Naive thymus-derived CD4-positive, alpha-beta T cell (primary cell): ENCODE measurements at regions of chr4 and their contacts with region 1.

Region 1: GRCh38 chr4:103019308-103020124 is at the start of gene SLC9B1:
- DNase-seq: peak; percentile 87 to 95 (median 92)
- ATAC-seq: peak; percentile 98
- H3K4me3 ChIP-seq: peak within 1 kb of the TSS; percentile 48
- H3K4me3 Mint-ChIP-seq: peak within 1 kb of the TSS; percentile 84 to 98 (median 93)
- H3K27ac ChIP-seq: peak within 1 kb of the TSS; percentile 80
- H3K27ac Mint-ChIP-seq: peak within 1 kb of the TSS in 6 of 9 donors; percentile 96 to 99 (median 98)
- H3K4me1 ChIP-seq: peaks cover 13 to 14% of the 10 kb centered on the region in 2 donors
- H3K4me1 Mint-ChIP-seq: peaks cover 0 to 29% (median 20%) of the 10 kb centered on the region in 7 donors
- H3K27me3 ChIP-seq: no peaks in the 10 kb centered on the region
- H3K27me3 Mint-ChIP-seq: no peaks in the 10 kb centered on the region
- total RNA-seq, gene SLC9B1: 1.4 to 7.2 (median 3.9) TPM

Region 2: DNA sequence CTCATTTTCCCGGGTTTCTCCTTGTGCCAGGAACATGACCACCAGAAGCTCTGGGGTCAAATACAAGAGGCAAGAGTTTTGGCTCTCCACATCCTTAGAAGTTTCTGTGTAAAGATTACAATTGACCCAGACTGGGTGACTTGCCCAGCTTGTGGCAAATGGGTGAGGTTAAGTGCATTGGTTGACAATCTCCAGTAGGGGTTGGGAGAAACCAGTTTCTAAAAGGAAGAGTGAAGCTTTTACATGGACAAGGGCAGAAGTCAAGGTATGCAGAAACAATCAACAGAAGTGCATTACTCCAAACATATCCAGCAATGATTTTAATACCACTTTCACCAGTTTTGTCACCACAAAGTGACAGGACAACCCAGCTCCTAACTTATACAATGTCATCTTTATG is 764.1 kb before region 1 on chr4:
- CTCF ChIA-PET with region 1: no interaction called
- POLR2A ChIA-PET with region 1: no interaction called
- intact Hi-C with region 1: loop called in 1 of 2 experiments (anchors 10 kb)
- DNase-seq: no peak
- ATAC-seq: no peak
- H3K4me3 ChIP-seq: no peak overlapping the region
- H3K4me3 Mint-ChIP-seq: no peak overlapping the region
- H3K27ac ChIP-seq: no peak overlapping the region
- H3K27ac Mint-ChIP-seq: no peak overlapping the region
- H3K4me1 ChIP-seq: no peaks in the 10 kb centered on the region
- H3K4me1 Mint-ChIP-seq: peaks cover 0 to 9% (median 0%) of the 10 kb centered on the region in 7 donors
- H3K27me3 ChIP-seq: no peaks in the 10 kb centered on the region
- H3K27me3 Mint-ChIP-seq: no peaks in the 10 kb centered on the region

Region 3: DNA sequence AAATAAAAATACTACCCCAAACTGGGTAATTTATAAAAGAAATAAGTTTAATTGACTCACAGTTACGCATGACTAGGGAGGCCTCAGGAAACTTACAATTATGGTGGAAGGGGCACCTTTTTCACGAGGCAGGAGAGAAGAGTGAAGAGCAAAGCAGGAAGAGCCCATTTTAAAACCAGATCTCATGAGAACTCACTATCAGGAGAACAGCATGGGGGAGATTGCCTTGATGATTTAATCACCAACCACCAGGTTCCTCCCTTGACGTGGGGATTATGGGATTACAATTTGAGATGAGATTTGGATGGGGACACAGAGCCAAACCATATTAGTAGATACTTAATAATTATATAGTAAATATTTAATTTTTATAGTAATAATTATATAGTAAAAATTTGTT is 140.6 kb before region 1 on chr4:
- CTCF ChIA-PET with region 1: no interaction called
- POLR2A ChIA-PET with region 1: no interaction called
- intact Hi-C with region 1: no loop called
- DNase-seq: no peak
- ATAC-seq: no peak
- H3K4me3 ChIP-seq: no peak overlapping the region
- H3K4me3 Mint-ChIP-seq: no peak overlapping the region
- H3K27ac ChIP-seq: no peak overlapping the region
- H3K27ac Mint-ChIP-seq: peak overlapping the region in 1 of 9 donors; percentile 32
- H3K4me1 ChIP-seq: no peaks in the 10 kb centered on the region
- H3K4me1 Mint-ChIP-seq: peaks cover 5 to 24% (median 22%) of the 10 kb centered on the region in 7 donors
- H3K27me3 ChIP-seq: no peaks in the 10 kb centered on the region
- H3K27me3 Mint-ChIP-seq: no peaks in the 10 kb centered on the region

Region 4: DNA sequence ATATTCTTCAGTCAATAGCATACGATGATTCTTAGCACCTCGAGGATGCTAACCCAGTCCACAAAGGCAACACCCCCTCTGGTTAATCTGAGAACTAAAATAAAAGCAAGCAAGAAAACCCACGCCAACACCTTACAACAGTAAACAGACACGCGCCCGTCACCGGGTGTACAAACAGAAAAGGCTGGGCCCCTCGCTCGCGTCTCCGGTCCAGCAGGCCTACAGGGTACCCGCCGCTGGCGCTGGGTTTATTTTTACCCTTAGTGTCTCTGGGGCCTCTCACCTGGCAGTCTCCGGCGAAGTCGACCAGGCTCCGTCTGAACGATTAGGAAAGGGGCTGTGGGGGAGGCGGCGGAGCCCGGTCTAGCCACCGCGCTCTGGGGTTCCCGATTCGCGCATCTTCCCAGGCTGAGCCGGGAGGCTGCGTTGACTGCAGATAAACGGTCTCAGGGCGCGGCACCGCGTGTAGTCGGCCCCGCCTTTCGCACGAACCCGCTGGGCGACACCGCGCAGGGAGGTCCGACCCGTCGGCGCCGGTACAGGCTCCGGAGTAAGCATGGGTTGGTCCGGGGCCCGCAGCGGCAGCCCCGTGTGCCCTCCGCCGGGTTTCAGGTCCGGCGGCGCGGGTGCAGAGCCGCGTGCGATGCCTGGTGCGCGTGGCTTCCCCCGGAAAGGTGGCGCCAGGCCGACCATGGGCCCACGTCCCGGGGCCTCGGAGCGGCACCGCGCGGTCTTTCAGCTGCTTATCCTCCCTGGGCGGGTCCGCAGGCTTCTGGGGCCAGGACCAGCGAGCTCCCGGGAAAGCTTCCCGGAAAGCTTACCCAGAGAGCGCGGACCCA is 56.6 kb after region 1 on chr4:
- CTCF ChIA-PET with region 1: no interaction called
- POLR2A ChIA-PET with region 1: interaction called, 10 read pairs
- intact Hi-C with region 1: loop called (anchors 1 kb)
- DNase-seq: peak; percentile 53 to 75 (median 68)
- ATAC-seq: peak; percentile 83
- H3K4me3 ChIP-seq: peak overlapping the region; percentile 74
- H3K4me3 Mint-ChIP-seq: peak overlapping the region; percentile 77 to 97 (median 95)
- H3K27ac ChIP-seq: peak overlapping the region; percentile 87
- H3K27ac Mint-ChIP-seq: peak overlapping the region; percentile 86 to 99 (median 97)
- H3K4me1 ChIP-seq: peaks cover 10 to 17% of the 10 kb centered on the region in 2 donors
- H3K4me1 Mint-ChIP-seq: peaks cover 23 to 54% (median 47%) of the 10 kb centered on the region in 7 donors
- H3K27me3 ChIP-seq: no peaks in the 10 kb centered on the region
- H3K27me3 Mint-ChIP-seq: no peaks in the 10 kb centered on the region

Region 5: DNA sequence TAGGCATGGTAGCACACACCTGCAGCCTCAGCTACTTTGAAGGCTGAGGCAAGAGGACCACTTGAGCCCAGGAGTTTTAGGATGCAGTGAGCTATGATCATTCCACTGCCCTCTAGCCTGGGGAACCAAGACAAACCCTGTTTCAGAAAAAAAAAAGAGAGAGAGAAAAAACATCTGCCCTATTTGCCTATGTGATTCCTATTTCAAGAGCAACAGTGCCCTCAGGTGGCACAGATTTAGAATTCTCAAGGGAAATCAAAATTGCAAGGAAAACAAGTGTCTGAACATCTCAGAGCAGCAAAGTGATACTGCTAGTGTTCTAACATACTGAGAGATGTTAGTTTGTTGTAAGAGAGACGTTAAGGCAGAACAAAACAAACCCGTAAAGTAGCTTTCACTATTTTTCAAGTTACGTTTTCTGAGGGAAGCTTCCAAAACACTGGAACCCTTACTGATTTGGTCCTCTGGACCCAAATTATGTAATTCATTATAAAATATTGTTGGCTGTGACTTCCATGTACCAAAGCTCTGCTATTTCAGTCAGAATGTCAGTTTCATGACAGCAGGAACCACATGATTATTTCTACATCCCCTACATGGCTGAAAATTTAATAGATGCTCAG is 72.2 kb after region 1 on chr4:
- CTCF ChIA-PET with region 1: no interaction called
- POLR2A ChIA-PET with region 1: interaction called, 3 read pairs
- intact Hi-C with region 1: loop called in 1 of 2 experiments (anchors 1 kb)
- DNase-seq: peak in 7 of 9 donors; percentile 36 to 65 (median 50)
- ATAC-seq: peak; percentile 80
- H3K4me3 ChIP-seq: no peak overlapping the region
- H3K4me3 Mint-ChIP-seq: peak overlapping the region in 1 of 10 donors; percentile 78
- H3K27ac ChIP-seq: no peak overlapping the region
- H3K27ac Mint-ChIP-seq: peak overlapping the region in 3 of 9 donors; percentile 2 to 72 (median 41)
- H3K4me1 ChIP-seq: no peaks in the 10 kb centered on the region
- H3K4me1 Mint-ChIP-seq: peaks cover 0 to 26% (median 20%) of the 10 kb centered on the region in 7 donors
- H3K27me3 ChIP-seq: no peaks in the 10 kb centered on the region
- H3K27me3 Mint-ChIP-seq: no peaks in the 10 kb centered on the region

Region 6: GRCh38 chr4:103198111-103198765 is 178.7 kb after region 1 on chr4 and contains the start of gene CENPE:
- CTCF ChIA-PET with region 1: no interaction called
- POLR2A ChIA-PET with region 1: no interaction called
- intact Hi-C with region 1: loop called (anchors 1 to 5 kb)
- DNase-seq: peak; percentile 77 to 90 (median 87)
- ATAC-seq: peak; percentile 93
- H3K4me3 ChIP-seq: peak within 1 kb of the TSS; percentile 95
- H3K4me3 Mint-ChIP-seq: peak within 1 kb of the TSS; percentile 81 to 99 (median 96)
- H3K27ac ChIP-seq: peak within 1 kb of the TSS; percentile 91
- H3K27ac Mint-ChIP-seq: peak within 1 kb of the TSS; percentile 87 to 100 (median 99)
- H3K4me1 ChIP-seq: peaks cover 0 to 6% of the 10 kb centered on the region in 2 donors
- H3K4me1 Mint-ChIP-seq: peaks cover 6 to 29% (median 10%) of the 10 kb centered on the region in 7 donors
- H3K27me3 ChIP-seq: no peaks in the 10 kb centered on the region
- H3K27me3 Mint-ChIP-seq: peaks cover 0 to 21% (median 7%) of the 10 kb centered on the region in 5 donors
- total RNA-seq, gene CENPE: 1.1 to 35.8 (median 1.5) TPM